ENCODE measurements at regions of chr2 and their contacts with region 1.

Region 1: DNA sequence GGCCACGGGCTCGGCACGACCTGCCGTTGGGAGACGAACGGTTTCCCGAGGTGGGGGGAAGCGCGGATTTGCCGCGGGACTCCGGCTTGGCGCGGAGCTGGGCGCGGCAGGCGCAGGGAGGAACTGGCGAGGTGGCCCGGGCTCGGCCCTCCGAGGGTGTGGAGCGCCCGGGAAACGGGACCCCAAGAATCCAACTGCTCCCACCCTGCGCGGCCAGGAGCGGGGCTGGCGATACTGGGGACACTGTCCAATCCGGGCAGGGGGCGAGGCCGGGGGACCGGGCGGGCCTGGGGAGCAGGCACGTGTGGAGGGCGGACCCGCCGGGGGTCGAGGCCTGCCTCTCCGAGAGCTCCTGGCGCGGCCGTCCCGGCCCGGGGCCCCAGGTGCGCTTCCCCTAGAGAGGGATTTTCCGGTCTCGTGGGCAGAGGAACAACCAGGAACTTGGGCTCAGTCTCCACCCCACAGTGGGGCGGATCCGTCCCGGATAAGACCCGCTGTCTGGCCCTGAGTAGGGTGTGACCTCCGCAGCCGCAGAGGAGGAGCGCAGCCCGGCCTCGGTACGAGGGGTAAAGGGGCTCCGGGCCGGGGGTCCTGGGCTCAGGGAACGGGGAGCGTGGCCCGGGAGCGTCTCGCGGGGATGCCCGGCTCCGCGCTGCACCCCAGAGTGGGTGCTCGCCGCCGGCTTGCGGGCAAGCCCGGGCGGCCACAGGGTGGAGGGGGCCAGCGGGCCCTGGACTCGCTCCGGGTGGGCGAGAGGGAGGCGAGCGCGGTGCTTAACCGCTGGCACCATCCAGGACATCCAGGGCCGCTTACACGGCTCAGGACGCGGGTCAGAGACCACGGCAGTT is at the start of gene ANXA4:
- DNase-seq: peak; percentile 94
- total RNA-seq, gene ANXA4: 39.7 TPM

Region 2: DNA sequence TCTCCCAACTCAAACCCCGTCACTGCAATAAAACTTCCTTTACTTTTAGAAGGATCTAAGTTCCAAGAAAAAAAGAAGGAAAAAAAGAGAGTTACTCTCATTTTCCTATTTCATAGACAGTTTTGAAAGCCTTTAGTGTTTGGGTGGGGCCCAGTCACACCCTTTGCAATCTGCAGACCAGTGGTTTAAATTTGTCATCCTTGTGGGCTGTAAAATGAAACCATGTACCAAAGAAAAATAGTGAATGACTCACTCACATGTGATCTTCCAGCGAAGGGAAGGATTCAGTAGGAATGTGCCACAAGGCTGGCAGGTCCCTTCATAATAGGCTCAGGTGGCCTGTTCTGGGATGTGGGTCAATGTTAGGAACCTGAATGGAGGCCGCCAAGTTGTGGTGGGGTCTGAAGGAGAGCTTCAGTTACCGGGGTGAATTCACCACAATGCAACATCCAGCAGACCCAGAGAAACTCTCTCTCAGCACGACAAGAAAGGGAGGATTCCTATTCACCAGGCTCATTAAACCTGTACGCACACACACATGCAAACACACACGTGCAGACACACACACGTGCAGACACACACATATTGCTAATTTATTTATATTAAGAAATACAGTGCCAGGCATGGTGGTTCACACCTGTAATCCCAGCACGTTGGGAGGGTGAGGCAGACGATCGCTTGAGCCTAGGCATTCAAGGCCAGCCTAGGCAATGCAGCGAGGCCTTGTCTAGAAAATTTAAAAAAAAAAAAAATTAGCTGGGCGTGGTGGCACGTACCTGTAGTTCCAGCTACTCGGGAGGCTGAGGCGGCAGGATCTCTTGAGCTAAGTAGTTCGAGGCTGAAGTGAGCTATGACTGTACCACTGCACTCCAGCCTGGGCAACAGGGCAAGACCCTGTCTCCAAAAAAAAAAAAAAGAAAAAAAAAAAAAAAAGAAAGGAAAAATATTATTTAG is 28.6 kb after region 1 on chr2:
- intact Hi-C with region 1: loop called (anchors 1 kb)
- DNase-seq: no peak

Region 3: GRCh38 chr2:69816923-69817542 is 75.2 kb after region 1 on chr2:
- intact Hi-C with region 1: loop called (anchors 5 kb)
- DNase-seq: no peak